ENCODE measurements at regions of chr6 and their contacts with region 1.

Region 1: GRCh38 chr6:42661540-42662153 is 60.8 kb downstream of the PRPH2 start:
- DNase-seq: peak; percentile 90
- H3K4me3 ChIP-seq: no peak overlapping the region
- H3K27ac ChIP-seq: peak overlapping the region in 1 of 4 donors; percentile 3
- H3K4me1 ChIP-seq: peaks cover 0 to 7% (median 0%) of the 10 kb centered on the region in 4 donors
- H3K27me3 ChIP-seq: no peaks in the 10 kb centered on the region
- CTCF ChIP-seq: peak; percentile 67 to 88 (median 87)
- EP300 ChIP-seq: no peak
- POLR2A ChIP-seq: no peak

Region 2: DNA sequence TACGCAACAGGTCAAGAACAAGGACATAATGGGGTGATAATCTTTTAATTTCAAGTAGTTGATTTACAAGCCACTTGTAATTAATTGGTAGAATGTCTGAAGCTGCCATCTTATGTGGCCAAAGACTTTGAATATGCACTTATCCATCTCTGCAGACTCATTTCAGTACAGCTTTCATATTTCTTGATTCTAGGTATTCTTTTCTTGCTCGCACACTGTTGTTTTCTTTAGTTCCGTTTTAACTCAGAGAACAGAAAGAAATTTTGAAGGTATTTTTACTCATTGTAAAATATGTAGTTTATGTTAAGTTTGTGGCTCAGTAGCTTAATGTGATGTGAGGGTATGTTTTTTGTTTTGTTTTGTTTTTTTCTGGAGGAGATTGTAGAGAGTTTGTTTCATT is 24.0 kb before region 1 on chr6:
- intact Hi-C with region 1: no loop called
- DNase-seq: no peak
- H3K4me3 ChIP-seq: no peak overlapping the region
- H3K27ac ChIP-seq: no peak overlapping the region
- H3K4me1 ChIP-seq: no peaks in the 10 kb centered on the region
- H3K27me3 ChIP-seq: no peaks in the 10 kb centered on the region
- CTCF ChIP-seq: no peak
- EP300 ChIP-seq: no peak
- POLR2A ChIP-seq: no peak

Region 3: GRCh38 chr6:42879372-42880239 is 218.0 kb after region 1 on chr6 and contains the start of gene RPL7L1:
- intact Hi-C with region 1: loop called (anchors 1 kb)
- DNase-seq: peak; percentile 93
- H3K4me3 ChIP-seq: peak within 1 kb of the TSS; percentile 54 to 71 (median 60)
- H3K27ac ChIP-seq: peak within 1 kb of the TSS; percentile 87 to 92 (median 92)
- H3K4me1 ChIP-seq: peaks cover 0 to 40% (median 22%) of the 10 kb centered on the region in 4 donors
- H3K27me3 ChIP-seq: no peaks in the 10 kb centered on the region
- CTCF ChIP-seq: peak in 1 of 4 experiments; percentile 29
- EP300 ChIP-seq: no peak
- POLR2A ChIP-seq: peak in 1 of 2 donors; percentile 54
- total RNA-seq, gene RPL7L1: 67.6 to 79.0 (median 75.7) TPM